ENCODE measurements at regions of chr5 and their contacts with region 1.

Region 1: GRCh38 chr5:141691867-141692532 is 10.0 kb upstream of the ARAP3 start:
- DNase-seq: peak; percentile 70 to 95 (median 86)
- ATAC-seq: peak; percentile 74
- H3K4me3 ChIP-seq: peak overlapping the region; percentile 16 to 34
- H3K4me3 Mint-ChIP-seq: peak overlapping the region; percentile 67
- H3K27ac ChIP-seq: no peak overlapping the region
- H3K27ac Mint-ChIP-seq: no peak overlapping the region
- H3K4me1 ChIP-seq: peaks cover 18% of the 10 kb centered on the region
- H3K4me1 Mint-ChIP-seq: peaks cover 17% of the 10 kb centered on the region
- H3K27me3 ChIP-seq: no peaks in the 10 kb centered on the region
- H3K27me3 Mint-ChIP-seq: peaks cover 11% of the 10 kb centered on the region
- CTCF ChIP-seq: peak; percentile 97

Region 2: GRCh38 chr5:141657937-141658545 is 34.0 kb before region 1 on chr5:
- CTCF ChIA-PET with region 1: interaction called, 13 read pairs
- POLR2A ChIA-PET with region 1: no interaction called
- intact Hi-C with region 1: no loop called
- DNase-seq: no peak
- ATAC-seq: no peak
- H3K4me3 ChIP-seq: no peak overlapping the region
- H3K4me3 Mint-ChIP-seq: no peak overlapping the region
- H3K27ac ChIP-seq: no peak overlapping the region
- H3K27ac Mint-ChIP-seq: no peak overlapping the region
- H3K4me1 ChIP-seq: no peaks in the 10 kb centered on the region
- H3K4me1 Mint-ChIP-seq: peaks cover under 1% of the 10 kb centered on the region
- H3K27me3 ChIP-seq: no peaks in the 10 kb centered on the region
- H3K27me3 Mint-ChIP-seq: peaks cover 3% of the 10 kb centered on the region
- CTCF ChIP-seq: no peak

Region 3: GRCh38 chr5:141681695-141682641 is 10.0 kb before region 1 on chr5 and contains the start of gene ARAP3:
- CTCF ChIA-PET with region 1: interaction called, 64 read pairs
- POLR2A ChIA-PET with region 1: interaction called, 24 read pairs
- intact Hi-C with region 1: no loop called
- DNase-seq: peak in 7 of 9 experiments; percentile 30 to 78 (median 49)
- ATAC-seq: peak; percentile 54
- H3K4me3 ChIP-seq: peak within 1 kb of the TSS; percentile 55 to 56
- H3K4me3 Mint-ChIP-seq: peak within 1 kb of the TSS; percentile 76
- H3K27ac ChIP-seq: peak within 1 kb of the TSS in 1 of 2 experiments; percentile 34
- H3K27ac Mint-ChIP-seq: peak within 1 kb of the TSS; percentile 49
- H3K4me1 ChIP-seq: peaks cover 30% of the 10 kb centered on the region
- H3K4me1 Mint-ChIP-seq: peaks cover 28% of the 10 kb centered on the region
- H3K27me3 ChIP-seq: no peaks in the 10 kb centered on the region
- H3K27me3 Mint-ChIP-seq: no peaks in the 10 kb centered on the region
- CTCF ChIP-seq: no peak
- total RNA-seq, gene ARAP3: 0.73 to 1.2 TPM

Region 4: DNA sequence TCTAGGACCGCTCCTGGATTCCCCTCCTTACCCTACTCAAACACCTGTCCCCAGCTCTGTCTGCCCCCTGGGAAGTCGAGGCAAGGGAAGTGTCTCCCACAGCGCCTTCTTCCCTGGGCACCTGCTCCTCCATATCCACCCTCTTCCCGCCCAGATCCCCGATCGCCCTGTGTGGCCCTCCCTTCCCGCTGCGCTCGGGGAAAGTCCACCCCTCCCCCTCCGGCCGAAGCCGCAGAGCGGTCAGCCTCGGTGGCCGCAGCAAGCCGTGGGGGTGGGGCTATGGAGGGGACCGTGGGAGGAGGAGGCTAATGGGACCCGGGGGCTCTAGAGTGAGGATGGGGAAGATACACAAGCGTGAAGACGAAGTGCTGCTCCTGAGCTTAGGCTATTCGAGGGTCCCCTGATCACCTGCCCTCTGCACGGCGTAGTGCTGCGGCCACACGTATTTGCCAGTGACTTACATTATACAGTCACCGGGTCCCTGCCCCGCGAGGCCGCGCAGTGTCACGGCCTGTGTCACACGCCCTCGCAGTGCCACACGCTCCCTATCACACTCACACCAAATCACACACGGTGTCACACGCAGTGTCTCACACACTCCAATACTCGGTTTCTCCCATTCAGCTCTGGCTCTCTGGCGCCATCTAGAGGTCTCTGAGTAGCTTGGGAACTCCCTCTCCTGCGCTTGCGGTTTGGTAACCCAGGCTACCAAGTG is 186.9 kb after region 1 on chr5:
- CTCF ChIA-PET with region 1: interaction called, 350 read pairs
- POLR2A ChIA-PET with region 1: interaction called, 9 read pairs
- intact Hi-C with region 1: loop called (anchors 1 kb)
- DNase-seq: peak; percentile 73 to 96 (median 90)
- ATAC-seq: peak; percentile 84
- H3K4me3 ChIP-seq: peak overlapping the region; percentile 48 to 73
- H3K4me3 Mint-ChIP-seq: peak overlapping the region; percentile 76
- H3K27ac ChIP-seq: no peak overlapping the region
- H3K27ac Mint-ChIP-seq: peak overlapping the region; percentile 1
- H3K4me1 ChIP-seq: peaks cover 35% of the 10 kb centered on the region
- H3K4me1 Mint-ChIP-seq: peaks cover 26% of the 10 kb centered on the region
- H3K27me3 ChIP-seq: peaks cover 43 to 60% of the 10 kb centered on the region in 2 experiments
- H3K27me3 Mint-ChIP-seq: peaks cover 76% of the 10 kb centered on the region
- CTCF ChIP-seq: peak; percentile 98

Region 5: DNA sequence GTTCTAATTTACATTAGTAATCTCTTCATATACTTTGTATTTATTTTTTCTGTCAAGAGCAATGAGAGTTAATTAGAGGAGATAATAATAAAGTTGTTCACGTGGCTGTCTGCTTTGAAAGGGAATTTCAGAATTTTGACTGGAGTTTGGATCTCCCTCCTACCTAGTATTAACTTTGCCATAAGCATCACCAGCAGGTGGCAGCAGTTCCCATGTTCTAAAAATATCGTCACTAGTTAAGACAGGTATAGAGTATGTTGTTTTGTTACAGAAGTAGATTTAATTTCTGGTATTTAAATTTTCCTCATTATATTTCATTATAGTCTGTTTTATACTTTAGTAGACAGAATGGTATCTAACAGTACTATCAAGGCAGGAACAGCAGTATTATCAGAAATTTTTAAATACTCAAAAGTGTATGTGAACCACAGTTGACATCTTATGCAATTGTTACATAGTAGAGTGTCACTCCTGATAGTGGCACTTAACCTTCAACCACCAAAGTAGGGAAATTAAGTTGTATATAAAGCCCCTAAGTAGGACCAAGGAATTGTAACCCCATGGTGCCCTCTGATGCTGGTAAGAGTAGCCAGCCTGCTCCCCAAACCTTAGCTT is 300.5 kb after region 1 on chr5:
- CTCF ChIA-PET with region 1: interaction called, 19 read pairs
- POLR2A ChIA-PET with region 1: no interaction called
- intact Hi-C with region 1: loop called in 1 of 2 experiments (anchors 1 kb)
- DNase-seq: peak; percentile 59 to 87 (median 81)
- ATAC-seq: peak; percentile 87
- H3K4me3 ChIP-seq: no peak overlapping the region
- H3K4me3 Mint-ChIP-seq: no peak overlapping the region
- H3K27ac ChIP-seq: no peak overlapping the region
- H3K27ac Mint-ChIP-seq: no peak overlapping the region
- H3K4me1 ChIP-seq: no peaks in the 10 kb centered on the region
- H3K4me1 Mint-ChIP-seq: peaks cover 5% of the 10 kb centered on the region
- H3K27me3 ChIP-seq: no peaks in the 10 kb centered on the region
- H3K27me3 Mint-ChIP-seq: no peaks in the 10 kb centered on the region
- CTCF ChIP-seq: peak; percentile 97

Region 6: DNA sequence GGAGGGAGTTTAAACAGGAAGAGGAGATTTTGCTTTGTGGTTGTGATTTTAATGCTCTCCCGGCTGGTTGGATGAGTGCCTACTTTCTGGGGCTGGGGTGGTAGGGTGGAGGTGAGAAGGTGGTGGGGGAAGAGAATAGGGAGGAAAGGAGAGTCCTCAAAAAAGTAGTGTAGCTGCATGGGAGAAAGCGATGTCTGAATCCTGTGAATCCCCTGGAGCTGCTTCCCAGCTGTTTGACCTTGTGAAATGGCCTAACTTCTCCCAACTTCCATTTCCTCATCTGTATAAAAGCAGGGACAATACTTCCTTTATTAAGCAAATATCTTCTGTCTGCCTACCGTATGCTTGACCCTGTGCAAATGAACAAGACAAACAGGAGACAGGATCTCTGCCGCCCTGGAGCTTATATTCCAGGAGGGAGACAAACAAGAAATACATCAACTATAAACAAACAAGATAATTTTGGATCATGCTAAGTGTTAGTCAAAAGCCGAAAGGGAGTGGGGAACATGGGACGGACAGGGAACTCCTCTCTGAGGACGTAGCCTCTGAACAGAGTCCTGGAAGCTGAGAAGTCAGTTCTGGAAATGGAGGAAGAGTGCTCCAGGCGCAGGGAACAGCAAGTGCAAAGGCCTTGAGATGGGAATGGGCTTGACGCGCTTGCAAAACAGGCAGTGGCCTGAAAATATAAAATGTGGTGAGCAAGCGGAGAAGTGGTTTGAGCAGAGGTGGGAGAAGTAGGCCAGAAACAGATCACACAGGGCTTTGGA is 529.3 kb after region 1 on chr5:
- CTCF ChIA-PET with region 1: no interaction called
- POLR2A ChIA-PET with region 1: no interaction called
- intact Hi-C with region 1: loop called in 1 of 2 experiments (anchors 10 kb)
- DNase-seq: no peak
- ATAC-seq: no peak
- H3K4me3 ChIP-seq: no peak overlapping the region
- H3K4me3 Mint-ChIP-seq: no peak overlapping the region
- H3K27ac ChIP-seq: no peak overlapping the region
- H3K27ac Mint-ChIP-seq: peak overlapping the region; percentile 18
- H3K4me1 ChIP-seq: peaks cover 27% of the 10 kb centered on the region
- H3K4me1 Mint-ChIP-seq: peaks cover 42% of the 10 kb centered on the region
- H3K27me3 ChIP-seq: peaks cover 0 to 2% of the 10 kb centered on the region in 2 experiments
- H3K27me3 Mint-ChIP-seq: peaks cover 16% of the 10 kb centered on the region
- CTCF ChIP-seq: no peak